ENCODE measurements at regions of chr3 and their contacts with region 1.

Region 1: GRCh38 chr3:127750226-127751031 is 71.9 kb downstream of the MGLL start:
- DNase-seq: peak; percentile 88
- ATAC-seq: peak; percentile 58
- H3K4me3 ChIP-seq: peak overlapping the region; percentile 48; the same call in 1 of the 2 replicates
- H3K27ac ChIP-seq: peak overlapping the region; percentile 99
- H3K4me1 ChIP-seq: peaks cover 69% of the 10 kb centered on the region
- H3K27me3 ChIP-seq: no peaks in the 10 kb centered on the region
- CTCF ChIP-seq: no peak
- EP300 ChIP-seq: peak; percentile 83 to 87
- POLR2A ChIP-seq: no peak
- RAD21 ChIP-seq: 0 out of 2 replicates have a peak, but pooled peaks have one; percentile 11

Region 2: DNA sequence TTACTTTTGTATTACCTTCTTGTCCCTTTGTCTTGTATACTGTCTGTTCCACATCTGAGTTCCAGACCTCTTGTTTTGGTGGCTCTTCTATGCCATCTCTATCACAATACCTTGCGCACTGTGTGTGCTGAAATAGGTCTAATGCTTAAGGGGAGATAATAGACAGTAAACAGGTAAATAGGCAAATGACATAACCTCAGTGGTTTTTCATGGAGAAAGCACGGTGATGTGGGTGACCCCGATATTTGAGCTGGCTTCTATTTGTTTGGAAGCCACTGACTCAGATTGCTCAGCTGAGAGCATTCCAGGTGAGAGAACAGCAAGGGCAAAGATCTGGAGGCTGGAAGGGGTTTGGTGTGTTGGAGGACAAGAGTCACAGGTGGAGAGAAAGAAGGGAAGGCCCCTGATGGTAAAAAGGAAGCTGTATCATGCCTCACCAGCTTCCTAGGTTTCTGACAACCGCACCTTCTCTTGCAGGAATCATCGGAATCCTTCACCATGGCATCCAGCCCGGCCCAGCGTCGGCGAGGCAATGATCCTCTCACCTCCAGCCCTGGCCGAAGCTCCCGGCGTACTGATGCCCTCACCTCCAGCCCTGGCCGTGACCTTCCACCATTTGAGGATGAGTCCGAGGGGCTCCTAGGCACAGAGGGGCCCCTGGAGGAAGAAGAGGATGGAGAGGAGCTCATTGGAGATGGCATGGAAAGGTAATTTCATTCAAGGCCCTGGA is 151.4 kb before region 1 on chr3:
- CTCF ChIA-PET with region 1: no interaction called
- POLR2A ChIA-PET with region 1: interaction called, 4 read pairs
- RAD21 ChIA-PET with region 1: no interaction called
- SMC1A ChIA-PET with region 1: interaction called, 3 read pairs
- in situ Hi-C with region 1: no loop called
- intact Hi-C with region 1: loop called (anchors 5 kb)
- DNase-seq: no peak
- ATAC-seq: no peak
- H3K4me3 ChIP-seq: peak overlapping the region; percentile 94
- H3K27ac ChIP-seq: peak overlapping the region; percentile 91
- H3K4me1 ChIP-seq: peaks cover 18% of the 10 kb centered on the region
- H3K27me3 ChIP-seq: no peaks in the 10 kb centered on the region
- CTCF ChIP-seq: no peak
- EP300 ChIP-seq: no peak
- POLR2A ChIP-seq: no peak
- RAD21 ChIP-seq: no peak

Region 3: DNA sequence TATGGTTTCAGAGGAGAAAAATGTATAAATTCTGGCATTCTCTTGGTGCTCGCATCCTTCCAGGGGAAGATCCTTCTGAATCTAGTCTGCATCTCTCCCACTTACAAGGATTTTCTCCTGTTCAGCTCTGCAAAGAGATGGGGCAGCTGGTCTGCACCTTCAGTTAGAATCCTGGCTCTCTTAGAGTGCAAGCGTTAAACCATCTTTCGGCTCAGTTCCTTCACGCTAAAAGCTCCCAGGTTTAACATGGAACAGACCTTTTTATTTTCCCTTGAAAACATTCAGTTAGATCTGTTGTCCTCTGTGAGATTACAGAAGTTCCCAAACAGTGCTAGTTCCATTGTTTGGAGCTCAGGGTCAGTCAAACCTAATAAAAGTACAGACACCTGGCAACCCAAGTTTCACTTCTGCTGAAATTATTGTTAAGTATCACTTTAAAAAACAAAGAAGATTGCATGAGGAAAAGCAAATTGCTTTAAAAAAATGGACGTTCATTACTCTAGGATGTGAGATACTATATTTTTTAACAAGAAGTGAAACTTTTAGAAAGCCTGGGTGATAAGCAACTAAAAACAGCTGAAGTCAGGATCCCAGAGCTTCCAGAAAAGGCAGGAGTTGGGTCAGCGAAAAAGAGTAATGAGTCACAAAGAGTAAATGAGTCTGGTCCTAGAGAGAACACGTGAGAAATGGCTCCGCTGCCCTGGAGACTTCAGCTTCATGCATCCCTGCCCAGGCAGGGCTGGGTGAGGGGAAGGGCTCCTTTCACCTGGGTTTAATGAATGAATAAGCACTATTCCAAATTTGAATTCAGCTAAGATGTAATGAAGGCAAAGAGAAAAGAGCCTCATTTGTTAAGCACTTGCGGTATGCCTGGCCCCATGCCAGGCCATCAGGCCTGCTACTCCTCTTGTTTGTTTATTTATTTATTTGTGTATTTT is 14.4 kb before region 1 on chr3:
- CTCF ChIA-PET with region 1: interaction called, 18 read pairs
- POLR2A ChIA-PET with region 1: interaction called, 32 read pairs
- RAD21 ChIA-PET with region 1: interaction called, 60 read pairs
- SMC1A ChIA-PET with region 1: interaction called, 62 read pairs
- in situ Hi-C with region 1: no loop called
- intact Hi-C with region 1: loop called (anchors 1 kb)
- DNase-seq: peak; percentile 85
- ATAC-seq: peak; percentile 85
- H3K4me3 ChIP-seq: peak overlapping the region; percentile 77
- H3K27ac ChIP-seq: peak overlapping the region; percentile 97
- H3K4me1 ChIP-seq: peaks cover 31% of the 10 kb centered on the region
- H3K27me3 ChIP-seq: no peaks in the 10 kb centered on the region
- CTCF ChIP-seq: no peak
- EP300 ChIP-seq: peak in 1 of 2 experiments; percentile 71
- POLR2A ChIP-seq: no peak
- RAD21 ChIP-seq: no peak

Region 4: GRCh38 chr3:127768346-127769008 is 18.0 kb after region 1 on chr3:
- CTCF ChIA-PET with region 1: interaction called, 16 read pairs
- POLR2A ChIA-PET with region 1: interaction called, 116 read pairs
- RAD21 ChIA-PET with region 1: interaction called, 149 read pairs
- SMC1A ChIA-PET with region 1: interaction called, 205 read pairs
- in situ Hi-C with region 1: no loop called
- intact Hi-C with region 1: loop called (anchors 2 kb)
- DNase-seq: no peak
- ATAC-seq: no peak
- H3K4me3 ChIP-seq: no peak overlapping the region
- H3K27ac ChIP-seq: peak overlapping the region; percentile 61
- H3K4me1 ChIP-seq: peaks cover 62% of the 10 kb centered on the region
- H3K27me3 ChIP-seq: no peaks in the 10 kb centered on the region
- CTCF ChIP-seq: no peak
- EP300 ChIP-seq: no peak
- POLR2A ChIP-seq: no peak
- RAD21 ChIP-seq: no peak

Region 5: GRCh38 chr3:127781411-127782081 is 31.1 kb after region 1 on chr3:
- CTCF ChIA-PET with region 1: interaction called, 4 read pairs
- POLR2A ChIA-PET with region 1: interaction called, 14 read pairs
- RAD21 ChIA-PET with region 1: interaction called, 20 read pairs
- SMC1A ChIA-PET with region 1: interaction called, 33 read pairs
- in situ Hi-C with region 1: no loop called
- intact Hi-C with region 1: no loop called
- DNase-seq: no peak
- ATAC-seq: no peak
- H3K4me3 ChIP-seq: no peak overlapping the region
- H3K27ac ChIP-seq: no peak overlapping the region
- H3K4me1 ChIP-seq: peaks cover 33% of the 10 kb centered on the region
- H3K27me3 ChIP-seq: no peaks in the 10 kb centered on the region
- CTCF ChIP-seq: no peak
- EP300 ChIP-seq: no peak
- POLR2A ChIP-seq: no peak
- RAD21 ChIP-seq: no peak

Region 6: GRCh38 chr3:127808197-127808596 is 57.8 kb after region 1 on chr3:
- CTCF ChIA-PET with region 1: interaction called, 5 read pairs
- POLR2A ChIA-PET with region 1: interaction called, 4 read pairs
- RAD21 ChIA-PET with region 1: interaction called, 7 read pairs
- SMC1A ChIA-PET with region 1: interaction called, 10 read pairs
- in situ Hi-C with region 1: no loop called
- intact Hi-C with region 1: no loop called
- DNase-seq: peak; percentile 63
- ATAC-seq: peak; percentile 85
- H3K4me3 ChIP-seq: 0 out of 2 replicates have a peak overlapping the region, but pooled peaks have one; percentile 4
- H3K27ac ChIP-seq: peak overlapping the region; percentile 45
- H3K4me1 ChIP-seq: peaks cover 22% of the 10 kb centered on the region
- H3K27me3 ChIP-seq: no peaks in the 10 kb centered on the region
- CTCF ChIP-seq: no peak
- EP300 ChIP-seq: peak in 1 of 2 experiments; percentile 22; a peak in 1 of 4 replicates
- POLR2A ChIP-seq: no peak
- RAD21 ChIP-seq: no peak

Region 7: GRCh38 chr3:127831723-127832172 is 81.3 kb after region 1 on chr3:
- CTCF ChIA-PET with region 1: interaction called, 82 read pairs
- POLR2A ChIA-PET with region 1: interaction called, 24 read pairs
- RAD21 ChIA-PET with region 1: interaction called, 92 read pairs
- SMC1A ChIA-PET with region 1: interaction called, 116 read pairs
- in situ Hi-C with region 1: no loop called
- intact Hi-C with region 1: loop called (anchors 2 kb)
- DNase-seq: no peak
- ATAC-seq: peak; percentile 15; the same call in 1 of the 3 replicates
- H3K4me3 ChIP-seq: no peak overlapping the region
- H3K27ac ChIP-seq: no peak overlapping the region
- H3K4me1 ChIP-seq: peaks cover 37% of the 10 kb centered on the region
- H3K27me3 ChIP-seq: no peaks in the 10 kb centered on the region
- CTCF ChIP-seq: peak; percentile 37 to 64 (median 58)
- EP300 ChIP-seq: no peak
- POLR2A ChIP-seq: no peak
- RAD21 ChIP-seq: peak; percentile 73

Region 8: GRCh38 chr3:128296469-128297251 is 546.2 kb after region 1 on chr3:
- CTCF ChIA-PET with region 1: no interaction called
- POLR2A ChIA-PET with region 1: no interaction called
- RAD21 ChIA-PET with region 1: no interaction called
- SMC1A ChIA-PET with region 1: no interaction called
- in situ Hi-C with region 1: no loop called
- intact Hi-C with region 1: no loop called
- DNase-seq: no peak
- ATAC-seq: no peak
- H3K4me3 ChIP-seq: no peak overlapping the region
- H3K27ac ChIP-seq: no peak overlapping the region
- H3K4me1 ChIP-seq: no peaks in the 10 kb centered on the region
- H3K27me3 ChIP-seq: no peaks in the 10 kb centered on the region
- CTCF ChIP-seq: no peak
- EP300 ChIP-seq: no peak
- POLR2A ChIP-seq: no peak
- RAD21 ChIP-seq: no peak

Measured in GM12878 (cell line).